ENCODE measurements at regions of chr12 and their contacts with region 1.

Region 1: DNA sequence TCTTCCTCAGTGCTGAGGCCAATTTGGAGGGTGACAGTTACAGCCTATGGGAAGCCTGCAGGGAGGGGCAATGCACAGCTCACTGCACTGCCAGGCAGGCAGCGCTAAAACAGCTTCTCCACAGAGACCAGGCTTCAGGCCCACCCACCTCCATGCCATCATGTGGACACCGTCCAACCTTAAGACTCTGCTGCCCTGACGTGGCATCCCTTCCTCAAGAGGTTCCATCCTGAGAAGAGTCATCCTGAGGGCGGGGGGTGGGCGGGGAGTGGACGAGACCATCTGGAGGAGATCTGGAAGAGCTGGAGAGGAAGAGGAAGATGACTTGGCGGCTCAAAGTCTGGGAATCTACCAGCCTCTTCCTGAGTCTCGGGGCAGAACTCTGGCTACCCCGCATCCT is 8.4 kb upstream of the ACVRL1 start:
- DNase-seq: peak; percentile 29 to 61
- ATAC-seq: no peak
- H3K4me3 ChIP-seq: no peak overlapping the region
- H3K27ac ChIP-seq: no peak overlapping the region
- H3K4me1 ChIP-seq: no peaks in the 10 kb centered on the region
- H3K27me3 ChIP-seq: no peaks in the 10 kb centered on the region

Region 2: DNA sequence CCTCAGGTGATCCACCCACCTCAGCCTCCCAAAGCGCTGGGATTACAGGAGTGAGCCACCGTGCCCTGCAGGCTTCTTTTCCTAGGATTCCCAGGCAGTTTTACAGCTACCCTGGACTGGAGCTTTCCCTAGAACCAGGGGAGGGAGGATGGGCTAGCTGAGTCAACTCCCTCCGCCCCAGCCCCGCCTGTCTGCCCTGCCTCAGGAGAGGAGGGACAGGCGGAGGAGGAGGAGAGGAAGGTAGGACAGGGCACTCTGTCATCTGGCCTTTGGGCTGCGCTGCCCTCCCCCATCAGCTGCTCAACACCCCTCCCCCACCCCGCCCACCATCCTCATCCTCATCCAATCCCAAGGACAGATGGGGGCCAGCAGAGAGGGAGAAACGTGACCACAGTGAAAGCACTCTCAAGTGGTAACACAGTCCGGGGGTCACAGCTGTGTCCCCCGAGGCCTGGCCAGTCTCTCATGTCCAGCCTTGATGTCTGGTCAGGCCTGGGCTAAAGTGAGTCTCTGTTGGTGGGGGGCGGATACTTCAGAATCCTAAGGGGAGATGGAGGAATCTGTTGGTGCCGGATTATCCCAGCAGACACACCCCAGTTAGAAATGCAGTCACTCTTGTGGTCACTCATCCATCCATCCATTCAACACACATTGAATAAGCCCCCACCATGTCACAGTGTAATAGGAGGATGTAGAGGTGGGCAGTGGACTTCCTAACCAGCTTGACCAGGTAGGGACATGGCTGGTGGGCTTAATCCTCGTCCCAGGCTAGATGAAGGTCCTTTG is 62.7 kb before region 1 on chr12:
- intact Hi-C with region 1: no loop called
- DNase-seq: no peak
- ATAC-seq: no peak
- H3K4me3 ChIP-seq: no peak overlapping the region
- H3K27ac ChIP-seq: no peak overlapping the region
- H3K4me1 ChIP-seq: no peaks in the 10 kb centered on the region
- H3K27me3 ChIP-seq: no peaks in the 10 kb centered on the region

Region 3: GRCh38 chr12:51980051-51980808 is 81.3 kb after region 1 on chr12:
- intact Hi-C with region 1: loop called in 1 of 2 experiments (anchors 5 kb)
- DNase-seq: peak in 1 of 2 donors; percentile 56
- ATAC-seq: peak; percentile 94
- H3K4me3 ChIP-seq: no peak overlapping the region
- H3K27ac ChIP-seq: no peak overlapping the region
- H3K4me1 ChIP-seq: no peaks in the 10 kb centered on the region
- H3K27me3 ChIP-seq: no peaks in the 10 kb centered on the region

Region 4: GRCh38 chr12:52091869-52092268 is 192.9 kb after region 1 on chr12:
- intact Hi-C with region 1: no loop called
- DNase-seq: no peak
- ATAC-seq: no peak
- H3K4me3 ChIP-seq: no peak overlapping the region
- H3K27ac ChIP-seq: no peak overlapping the region
- H3K4me1 ChIP-seq: no peaks in the 10 kb centered on the region
- H3K27me3 ChIP-seq: no peaks in the 10 kb centered on the region

Measured in aorta (tissue), 5 donors.